AG04449 (cell line): ENCODE measurements at regions of chr7 and their contacts with region 1.

Region 1: DNA sequence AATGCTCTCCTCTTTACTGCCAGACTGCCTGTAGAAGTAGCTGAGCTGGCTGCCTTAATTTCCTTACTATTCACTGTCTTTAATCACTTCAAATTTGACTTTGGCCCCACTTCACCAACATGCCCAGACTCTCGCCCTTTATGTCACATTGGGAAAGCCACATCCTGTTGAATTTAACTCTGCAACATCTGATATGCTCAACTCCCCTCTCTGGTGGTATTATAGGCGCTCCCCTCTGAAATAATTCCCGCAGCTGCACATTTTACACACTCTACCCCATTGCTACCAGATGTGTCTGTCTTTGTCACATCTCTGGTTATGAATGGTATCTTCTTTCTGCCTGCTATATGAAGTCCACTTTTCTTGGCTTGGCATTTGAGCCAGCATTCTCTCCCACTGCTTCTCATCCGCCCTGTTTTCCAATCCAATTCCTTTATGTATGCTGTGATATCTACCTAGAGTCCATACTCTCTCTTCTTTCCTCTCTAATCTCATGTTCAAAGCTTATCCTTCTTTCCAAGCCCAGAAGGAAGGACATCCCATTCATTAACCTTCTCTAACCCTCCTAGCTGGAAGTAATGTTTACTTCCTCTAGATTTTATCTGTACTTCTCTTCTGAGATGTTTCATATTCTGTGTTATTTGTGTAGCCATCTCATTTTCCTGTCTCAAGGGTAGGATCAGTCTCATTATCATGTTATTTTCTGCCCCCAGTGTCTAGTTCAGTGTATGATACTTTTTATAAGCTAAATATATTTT is 134.5 kb downstream of the ST7 start:
- DNase-seq: no peak
- H3K4me3 ChIP-seq: no peak overlapping the region
- CTCF ChIP-seq: no peak

Region 2: DNA sequence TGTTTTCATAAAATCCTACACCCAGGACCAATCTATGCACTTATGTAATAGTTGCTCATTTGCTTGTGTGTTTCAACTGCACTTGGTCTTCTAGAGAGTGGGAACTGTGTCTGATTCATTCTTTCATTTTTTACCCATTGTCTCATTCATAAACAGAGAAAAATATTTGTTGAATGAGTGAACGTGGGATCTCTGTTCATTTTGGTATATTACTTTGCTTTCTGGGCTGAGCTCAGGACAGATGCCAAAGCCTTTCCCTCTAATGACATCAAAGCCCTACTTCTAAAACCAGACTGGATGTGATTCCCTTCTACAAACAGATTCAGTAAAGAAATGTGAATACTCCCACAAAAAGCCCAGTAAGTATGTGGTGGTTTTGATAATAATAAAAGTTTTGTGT is 10.6 kb after region 1 on chr7:
- CTCF ChIA-PET with region 1: interaction called, 10 read pairs
- POLR2A ChIA-PET with region 1: no interaction called
- DNase-seq: peak; percentile 95
- H3K4me3 ChIP-seq: no peak overlapping the region
- CTCF ChIP-seq: no peak